Endothelial cell of umbilical vein (primary cell): ENCODE measurements at regions of chr2 and their contacts with region 1.

Region 1: GRCh38 chr2:85826990-85827878 is 61.6 kb downstream of the ST3GAL5 start:
- DNase-seq: peak; percentile 61
- H3K4me3 ChIP-seq: no peak overlapping the region
- H3K27ac ChIP-seq: no peak overlapping the region
- H3K4me1 ChIP-seq: no peaks in the 10 kb centered on the region
- H3K27me3 ChIP-seq: peaks cover 0 to 2% of the 10 kb centered on the region in 2 experiments
- CTCF ChIP-seq: peak; percentile 71 to 92
- POLR2A ChIP-seq: no peak

Region 2: GRCh38 chr2:85813982-85814801 is 13.0 kb before region 1 on chr2:
- CTCF ChIA-PET with region 1: interaction called, 53 read pairs
- POLR2A ChIA-PET with region 1: no interaction called
- dilution Hi-C with region 1: no loop called
- intact Hi-C with region 1: no loop called
- DNase-seq: peak; percentile 82
- H3K4me3 ChIP-seq: no peak overlapping the region
- H3K27ac ChIP-seq: no peak overlapping the region
- H3K4me1 ChIP-seq: no peaks in the 10 kb centered on the region
- H3K27me3 ChIP-seq: no peaks in the 10 kb centered on the region
- CTCF ChIP-seq: peak; percentile 97 to 98
- POLR2A ChIP-seq: no peak

Region 3: GRCh38 chr2:85858841-85859240 is 31.6 kb after region 1 on chr2:
- CTCF ChIA-PET with region 1: interaction called, 13 read pairs
- POLR2A ChIA-PET with region 1: no interaction called
- dilution Hi-C with region 1: no loop called
- intact Hi-C with region 1: no loop called
- DNase-seq: no peak
- H3K4me3 ChIP-seq: no peak overlapping the region
- H3K27ac ChIP-seq: no peak overlapping the region
- H3K4me1 ChIP-seq: peaks cover 21% of the 10 kb centered on the region
- H3K27me3 ChIP-seq: no peaks in the 10 kb centered on the region
- CTCF ChIP-seq: no peak
- POLR2A ChIP-seq: no peak

Region 4: DNA sequence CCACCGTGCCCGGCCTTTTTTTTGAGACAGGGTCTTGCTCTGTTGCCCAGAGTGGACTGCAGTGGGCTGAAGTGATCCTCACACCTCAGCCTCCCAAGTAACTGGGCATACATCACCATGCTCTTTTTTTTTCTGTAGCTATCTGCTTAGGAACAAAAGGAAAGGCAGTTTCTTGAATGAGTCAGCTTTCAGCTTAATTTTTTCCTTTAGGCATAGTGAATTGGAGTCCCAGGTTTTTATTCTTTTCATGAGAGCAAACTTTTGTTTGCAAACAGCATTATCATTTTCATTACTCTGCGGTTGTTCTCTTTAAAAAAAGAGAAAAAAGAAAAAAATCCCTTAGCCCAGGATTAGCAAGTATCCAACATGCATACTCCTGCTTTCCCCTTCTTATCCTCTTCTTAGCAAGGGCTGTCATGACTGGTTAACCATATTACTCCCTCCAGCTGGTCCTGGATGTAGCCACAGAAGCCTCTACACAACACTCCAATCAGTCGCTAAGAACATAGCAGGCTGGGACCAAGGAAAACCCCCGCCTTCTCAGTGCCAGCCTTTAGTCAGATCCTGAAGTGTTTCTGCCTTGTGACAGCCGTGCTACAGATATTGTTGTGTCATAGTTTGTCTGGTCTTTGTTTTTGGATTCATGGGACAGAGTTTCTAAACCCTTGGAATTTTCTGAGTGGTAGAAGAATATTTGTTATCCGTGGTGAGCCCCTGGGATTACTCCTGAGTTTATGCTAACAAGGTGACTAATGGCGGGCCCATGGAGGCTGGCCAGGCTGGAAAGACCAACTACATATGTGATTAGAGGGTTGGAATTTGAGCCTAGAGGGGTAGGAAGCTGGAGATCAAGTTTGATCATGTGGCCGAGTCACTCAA is 84.8 kb after region 1 on chr2:
- CTCF ChIA-PET with region 1: interaction called, 13 read pairs
- POLR2A ChIA-PET with region 1: no interaction called
- dilution Hi-C with region 1: no loop called
- intact Hi-C with region 1: no loop called
- DNase-seq: no peak
- H3K4me3 ChIP-seq: no peak overlapping the region
- H3K27ac ChIP-seq: no peak overlapping the region
- H3K4me1 ChIP-seq: no peaks in the 10 kb centered on the region
- H3K27me3 ChIP-seq: peaks cover 0 to 1% of the 10 kb centered on the region in 2 experiments
- CTCF ChIP-seq: no peak
- POLR2A ChIP-seq: no peak

Region 5: GRCh38 chr2:86028766-86029381 is 201.6 kb after region 1 on chr2:
- CTCF ChIA-PET with region 1: interaction called, 95 read pairs
- POLR2A ChIA-PET with region 1: no interaction called
- dilution Hi-C with region 1: no loop called
- intact Hi-C with region 1: no loop called
- DNase-seq: peak; percentile 89
- H3K4me3 ChIP-seq: no peak overlapping the region
- H3K27ac ChIP-seq: no peak overlapping the region
- H3K4me1 ChIP-seq: peaks cover 17% of the 10 kb centered on the region
- H3K27me3 ChIP-seq: no peaks in the 10 kb centered on the region
- CTCF ChIP-seq: no peak
- POLR2A ChIP-seq: no peak

Region 6: DNA sequence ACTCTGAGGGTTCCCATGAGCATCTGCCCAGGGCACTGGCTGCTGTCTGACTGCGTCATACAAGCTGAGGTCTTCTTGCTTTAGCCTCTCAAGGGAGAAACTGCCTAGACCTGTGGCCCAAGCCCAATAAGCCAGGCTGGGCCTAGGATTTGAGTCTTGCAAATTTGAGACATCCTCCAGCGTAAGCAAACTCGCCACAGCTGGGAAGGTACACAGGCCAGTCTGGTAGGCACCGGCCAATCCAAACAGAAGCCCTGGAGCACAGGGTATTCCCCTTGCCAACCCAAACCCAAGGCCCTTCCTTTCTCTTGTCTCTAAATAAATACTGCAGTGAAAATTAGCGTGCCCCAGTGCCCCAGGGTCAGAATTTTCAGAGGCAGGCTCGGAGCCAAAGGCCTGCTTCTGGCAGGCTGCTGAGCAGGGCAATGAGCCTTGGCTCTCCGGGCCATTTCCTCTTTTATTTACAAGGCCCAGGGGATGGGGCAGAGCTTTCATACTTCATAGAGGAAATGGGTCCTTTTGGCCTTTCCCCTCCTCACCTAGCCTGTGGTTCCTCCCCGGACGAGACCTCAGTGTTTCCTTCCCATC is 245.1 kb after region 1 on chr2:
- CTCF ChIA-PET with region 1: interaction called, 541 read pairs
- POLR2A ChIA-PET with region 1: interaction called, 3 read pairs
- dilution Hi-C with region 1: no loop called
- intact Hi-C with region 1: no loop called
- DNase-seq: peak; percentile 84
- H3K4me3 ChIP-seq: no peak overlapping the region
- H3K27ac ChIP-seq: peak overlapping the region; percentile 27
- H3K4me1 ChIP-seq: peaks cover 16% of the 10 kb centered on the region
- H3K27me3 ChIP-seq: no peaks in the 10 kb centered on the region
- CTCF ChIP-seq: no peak
- POLR2A ChIP-seq: no peak

Region 7: DNA sequence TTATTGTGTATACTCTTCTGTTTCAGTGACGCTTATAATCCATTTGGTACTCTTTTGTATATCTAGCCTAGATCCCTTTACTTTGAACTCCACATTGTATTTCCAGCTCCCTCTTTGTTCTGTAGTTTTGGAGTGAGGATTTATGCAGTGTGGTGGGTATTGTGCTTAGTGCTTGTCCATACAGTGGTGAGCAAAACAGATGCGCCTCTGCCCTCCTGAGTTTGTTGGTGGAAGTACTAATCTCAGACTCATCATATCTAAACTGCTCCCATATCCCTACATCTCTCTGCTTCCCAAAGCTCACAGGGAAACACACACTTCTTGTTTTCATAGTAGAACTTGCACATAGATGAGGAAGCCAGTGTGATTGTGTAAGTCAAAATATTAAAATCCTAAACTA is 290.9 kb after region 1 on chr2:
- CTCF ChIA-PET with region 1: interaction called, 12 read pairs
- POLR2A ChIA-PET with region 1: no interaction called
- dilution Hi-C with region 1: no loop called
- intact Hi-C with region 1: no loop called
- DNase-seq: no peak
- H3K4me3 ChIP-seq: no peak overlapping the region
- H3K27ac ChIP-seq: no peak overlapping the region
- H3K4me1 ChIP-seq: peaks cover under 1% of the 10 kb centered on the region
- H3K27me3 ChIP-seq: no peaks in the 10 kb centered on the region
- CTCF ChIP-seq: no peak
- POLR2A ChIP-seq: no peak